IMR-90 (cell line): ENCODE measurements at regions of chr3 and their contacts with region 1.

Region 1: DNA sequence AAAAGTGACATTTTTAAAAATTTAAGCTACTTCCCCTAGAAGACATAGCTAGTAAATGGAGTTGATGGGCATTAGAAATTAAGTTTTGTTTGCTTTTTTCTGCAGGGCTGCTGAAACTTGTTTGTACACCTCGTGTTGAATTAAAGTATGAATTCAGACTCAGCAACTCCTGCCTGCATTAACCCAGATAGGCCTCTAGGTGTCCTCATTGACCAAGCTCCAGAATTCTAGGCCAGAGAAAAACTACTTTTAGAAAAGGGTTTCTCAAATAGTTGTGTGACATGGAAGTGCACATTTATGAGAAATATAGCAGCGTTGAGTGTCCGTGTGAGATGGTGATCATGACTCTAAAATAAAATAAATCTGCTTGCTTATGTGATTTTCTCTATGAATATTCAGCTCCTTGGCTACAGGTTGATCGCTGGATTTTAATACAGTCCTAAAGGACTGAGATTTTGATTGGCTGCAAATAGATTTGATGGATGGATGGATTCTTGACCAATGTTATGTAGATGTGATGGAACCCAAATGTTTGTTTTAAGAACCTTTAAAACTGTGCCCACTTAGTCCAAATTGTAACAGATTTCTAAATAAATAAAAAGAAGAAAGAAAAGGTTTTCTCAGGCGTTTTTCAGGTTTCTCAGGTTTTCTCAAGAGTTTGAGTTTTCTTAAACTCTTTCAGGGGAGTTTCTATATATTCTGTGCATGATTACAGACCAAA is 39.4 kb upstream of the LMOD3 start:
- DNase-seq: peak; percentile 53
- ATAC-seq: peak; percentile 91
- H3K4me3 ChIP-seq: no peak overlapping the region
- H3K27ac ChIP-seq: no peak overlapping the region
- H3K4me1 ChIP-seq: no peaks in the 10 kb centered on the region
- H3K27me3 ChIP-seq: peaks cover 16% of the 10 kb centered on the region
- CTCF ChIP-seq: peak; percentile 94
- POLR2A ChIP-seq: no peak
- RAD21 ChIP-seq: peak; percentile 96

Region 2: GRCh38 chr3:68764554-68764953 is 397.2 kb before region 1 on chr3:
- CTCF ChIA-PET with region 1: no interaction called
- POLR2A ChIA-PET with region 1: no interaction called
- dilution Hi-C with region 1: no loop called
- in situ Hi-C with region 1: no loop called
- intact Hi-C with region 1: no loop called
- DNase-seq: no peak
- ATAC-seq: no peak
- H3K4me3 ChIP-seq: no peak overlapping the region
- H3K27ac ChIP-seq: no peak overlapping the region
- H3K4me1 ChIP-seq: no peaks in the 10 kb centered on the region
- H3K27me3 ChIP-seq: no peaks in the 10 kb centered on the region
- CTCF ChIP-seq: no peak
- POLR2A ChIP-seq: no peak
- RAD21 ChIP-seq: no peak

Region 3: DNA sequence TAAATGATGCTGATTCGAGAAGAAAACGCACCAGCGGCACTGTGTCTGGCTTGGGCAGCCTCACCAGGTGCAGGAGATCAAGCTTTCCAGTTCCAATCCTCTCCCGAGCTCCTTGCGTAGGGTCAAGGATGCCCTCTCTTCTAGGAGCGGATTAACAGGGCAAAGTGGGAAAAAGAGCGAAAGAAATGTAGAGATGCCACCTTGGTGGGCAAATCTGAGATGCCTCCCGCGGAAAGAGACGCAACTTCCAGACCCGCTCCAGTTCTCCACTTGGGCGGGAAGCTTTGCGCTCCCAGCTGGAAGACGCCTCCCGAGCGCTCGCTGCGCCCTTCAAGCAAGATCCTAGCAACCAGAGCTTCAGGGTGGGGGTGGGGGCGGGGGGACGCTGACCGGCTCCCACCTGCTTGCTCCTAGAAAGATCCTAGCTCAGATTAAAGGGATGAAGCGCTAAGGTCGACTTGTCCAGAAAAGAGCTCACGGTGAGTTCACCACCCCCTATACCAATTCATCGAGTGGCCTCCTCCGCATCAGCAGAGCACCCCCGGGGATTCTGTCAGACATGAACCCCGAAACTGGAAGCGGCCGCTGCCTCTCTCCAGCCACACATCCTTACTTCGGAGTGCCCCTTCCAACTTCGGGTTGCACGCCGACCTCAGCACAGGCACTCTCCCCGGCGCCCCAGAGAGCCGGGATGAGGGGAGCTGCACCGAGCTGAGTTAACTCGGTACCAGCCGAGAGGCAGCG is 230.2 kb before region 1 on chr3:
- CTCF ChIA-PET with region 1: no interaction called
- POLR2A ChIA-PET with region 1: no interaction called
- dilution Hi-C with region 1: no loop called
- in situ Hi-C with region 1: no loop called
- intact Hi-C with region 1: no loop called
- DNase-seq: no peak
- ATAC-seq: no peak
- H3K4me3 ChIP-seq: no peak overlapping the region
- H3K27ac ChIP-seq: no peak overlapping the region
- H3K4me1 ChIP-seq: no peaks in the 10 kb centered on the region
- H3K27me3 ChIP-seq: peaks cover 26% of the 10 kb centered on the region
- CTCF ChIP-seq: no peak
- POLR2A ChIP-seq: no peak
- RAD21 ChIP-seq: no peak

Region 4: GRCh38 chr3:68943753-68944500 is 217.8 kb before region 1 on chr3:
- CTCF ChIA-PET with region 1: no interaction called
- POLR2A ChIA-PET with region 1: no interaction called
- dilution Hi-C with region 1: no loop called
- in situ Hi-C with region 1: no loop called
- intact Hi-C with region 1: no loop called
- DNase-seq: no peak
- ATAC-seq: no peak
- H3K4me3 ChIP-seq: no peak overlapping the region
- H3K27ac ChIP-seq: no peak overlapping the region
- H3K4me1 ChIP-seq: no peaks in the 10 kb centered on the region
- H3K27me3 ChIP-seq: no peaks in the 10 kb centered on the region
- CTCF ChIP-seq: no peak
- POLR2A ChIP-seq: no peak
- RAD21 ChIP-seq: no peak

Region 5: DNA sequence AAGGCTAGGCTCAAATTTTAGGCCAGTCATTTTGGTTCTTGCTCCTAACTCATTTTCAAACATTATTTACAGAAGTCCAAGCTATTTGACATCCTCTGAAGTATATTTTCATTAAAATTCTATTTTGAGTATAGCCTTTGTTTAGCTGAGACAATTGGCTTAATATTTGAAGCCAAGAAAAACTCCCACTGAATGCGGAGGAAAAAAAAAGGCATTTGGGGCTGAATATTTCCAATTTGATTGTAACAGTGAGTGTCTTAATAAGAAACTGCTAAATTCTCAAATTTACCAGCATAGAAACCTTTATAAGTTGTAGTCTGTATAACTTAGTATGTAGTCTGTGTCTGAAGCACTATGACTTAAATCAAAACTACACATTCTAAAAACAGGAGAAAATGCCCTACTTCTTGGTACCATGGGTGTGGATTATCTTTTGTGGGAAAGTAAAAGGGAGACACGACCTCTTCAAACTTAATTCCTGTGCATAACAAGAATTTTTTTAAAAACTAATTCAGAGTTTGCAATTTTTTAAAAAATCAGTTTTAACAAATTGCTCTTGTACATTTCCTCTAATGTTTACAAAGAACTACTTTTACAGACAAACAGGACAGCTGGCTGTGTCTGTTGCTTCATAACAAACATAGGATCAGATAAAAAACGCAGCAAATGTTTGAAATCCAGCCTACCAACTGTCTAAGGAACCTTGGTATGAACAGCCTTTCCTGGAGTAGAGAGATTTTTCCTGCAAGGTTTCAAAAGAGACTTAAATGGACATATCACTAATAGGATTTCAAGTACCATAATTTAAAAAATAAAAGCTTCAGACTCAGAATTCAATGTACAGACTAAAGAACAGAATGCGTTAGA is 13.4 kb after region 1 on chr3:
- CTCF ChIA-PET with region 1: interaction called, 16 read pairs
- POLR2A ChIA-PET with region 1: no interaction called
- dilution Hi-C with region 1: no loop called
- in situ Hi-C with region 1: no loop called
- intact Hi-C with region 1: no loop called
- DNase-seq: no peak
- ATAC-seq: no peak
- H3K4me3 ChIP-seq: no peak overlapping the region
- H3K27ac ChIP-seq: no peak overlapping the region
- H3K4me1 ChIP-seq: no peaks in the 10 kb centered on the region
- H3K27me3 ChIP-seq: peaks cover 6% of the 10 kb centered on the region
- CTCF ChIP-seq: no peak
- POLR2A ChIP-seq: no peak
- RAD21 ChIP-seq: no peak

Region 6: GRCh38 chr3:69240651-69241568 is 79.2 kb after region 1 on chr3:
- CTCF ChIA-PET with region 1: no interaction called
- POLR2A ChIA-PET with region 1: no interaction called
- dilution Hi-C with region 1: no loop called
- in situ Hi-C with region 1: no loop called
- intact Hi-C with region 1: no loop called
- DNase-seq: no peak
- ATAC-seq: no peak
- H3K4me3 ChIP-seq: no peak overlapping the region
- H3K27ac ChIP-seq: no peak overlapping the region
- H3K4me1 ChIP-seq: peaks cover 2% of the 10 kb centered on the region; the same call in 1 of the 2 replicates
- H3K27me3 ChIP-seq: peaks cover 58% of the 10 kb centered on the region
- CTCF ChIP-seq: no peak
- POLR2A ChIP-seq: no peak
- RAD21 ChIP-seq: no peak

Region 7: GRCh38 chr3:69288161-69288895 is 126.6 kb after region 1 on chr3:
- CTCF ChIA-PET with region 1: interaction called, 10 read pairs
- POLR2A ChIA-PET with region 1: no interaction called
- dilution Hi-C with region 1: no loop called
- in situ Hi-C with region 1: no loop called
- intact Hi-C with region 1: no loop called
- DNase-seq: no peak
- ATAC-seq: no peak
- H3K4me3 ChIP-seq: no peak overlapping the region
- H3K27ac ChIP-seq: no peak overlapping the region
- H3K4me1 ChIP-seq: no peaks in the 10 kb centered on the region
- H3K27me3 ChIP-seq: peaks cover 6% of the 10 kb centered on the region
- CTCF ChIP-seq: no peak
- POLR2A ChIP-seq: no peak
- RAD21 ChIP-seq: no peak

Region 8: DNA sequence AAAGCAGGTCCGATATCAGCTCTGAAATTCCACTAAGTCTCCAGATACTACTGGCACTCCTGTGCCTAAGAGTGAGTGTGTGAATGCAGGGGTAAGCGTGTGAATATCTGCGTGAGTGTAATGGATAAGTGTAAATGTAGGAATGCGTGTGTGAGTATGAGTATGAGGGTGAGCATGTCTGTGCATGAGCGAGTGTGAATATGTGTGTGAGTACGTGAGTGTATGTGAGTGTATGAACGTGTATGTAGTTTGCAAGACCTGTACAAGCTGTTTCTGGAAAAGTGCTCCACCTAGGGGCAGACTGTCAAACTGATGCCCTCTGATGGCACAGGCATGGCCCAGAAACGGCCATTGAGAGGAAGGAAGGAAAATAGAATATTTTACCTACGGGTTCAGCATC is 248.5 kb after region 1 on chr3:
- CTCF ChIA-PET with region 1: interaction called, 5 read pairs
- POLR2A ChIA-PET with region 1: no interaction called
- dilution Hi-C with region 1: no loop called
- in situ Hi-C with region 1: no loop called
- intact Hi-C with region 1: loop called (anchors 1 kb)
- DNase-seq: peak; percentile 53
- ATAC-seq: peak; percentile 93
- H3K4me3 ChIP-seq: no peak overlapping the region
- H3K27ac ChIP-seq: no peak overlapping the region
- H3K4me1 ChIP-seq: no peaks in the 10 kb centered on the region
- H3K27me3 ChIP-seq: peaks cover 1% of the 10 kb centered on the region
- CTCF ChIP-seq: peak; percentile 67
- POLR2A ChIP-seq: no peak
- RAD21 ChIP-seq: peak; percentile 40

Region 9: GRCh38 chr3:69671082-69671952 is 509.6 kb after region 1 on chr3:
- CTCF ChIA-PET with region 1: interaction called, 4 read pairs
- POLR2A ChIA-PET with region 1: no interaction called
- dilution Hi-C with region 1: no loop called
- in situ Hi-C with region 1: loop called (anchors 10 kb)
- intact Hi-C with region 1: loop called (anchors 1 kb)
- DNase-seq: peak; percentile 42
- ATAC-seq: peak; percentile 75
- H3K4me3 ChIP-seq: no peak overlapping the region
- H3K27ac ChIP-seq: no peak overlapping the region
- H3K4me1 ChIP-seq: no peaks in the 10 kb centered on the region
- H3K27me3 ChIP-seq: peaks cover 2% of the 10 kb centered on the region; the same call in 1 of the 2 replicates
- CTCF ChIP-seq: peak; percentile 77
- POLR2A ChIP-seq: no peak
- RAD21 ChIP-seq: peak; percentile 77

Region 10: DNA sequence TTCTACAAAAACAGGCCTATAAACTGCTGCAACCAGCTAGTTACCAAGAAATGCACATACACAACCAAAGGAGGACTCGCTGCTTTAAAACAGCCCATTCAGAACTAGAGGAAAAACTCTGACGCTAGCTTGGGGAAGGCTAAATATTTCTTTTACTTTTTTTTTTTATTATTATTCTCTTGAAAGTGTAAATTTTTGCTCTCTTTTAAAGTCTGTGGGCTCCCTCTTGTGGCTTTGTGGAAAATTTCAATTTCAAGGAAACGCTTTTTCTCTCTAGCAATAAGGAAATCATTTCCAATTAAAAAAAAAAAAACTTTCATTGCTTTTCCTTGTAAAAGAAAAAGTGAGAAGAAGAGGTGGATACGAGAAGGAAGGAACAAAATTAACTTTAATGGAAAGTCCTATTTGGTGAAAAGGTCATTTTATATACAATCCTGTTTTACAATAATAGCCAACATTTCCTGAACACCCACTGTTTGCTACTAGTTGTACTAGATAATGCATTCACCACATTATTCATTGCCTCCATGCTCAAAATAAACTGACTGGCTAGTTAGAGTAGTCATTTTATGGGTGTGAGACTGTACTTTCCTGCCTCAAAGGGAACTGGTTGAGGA is 786.6 kb after region 1 on chr3:
- CTCF ChIA-PET with region 1: no interaction called
- POLR2A ChIA-PET with region 1: no interaction called
- dilution Hi-C with region 1: no loop called
- in situ Hi-C with region 1: loop called (anchors 25 kb)
- intact Hi-C with region 1: loop called (anchors 2 kb)
- DNase-seq: peak; percentile 66
- ATAC-seq: peak; percentile 59
- H3K4me3 ChIP-seq: no peak overlapping the region
- H3K27ac ChIP-seq: peak overlapping the region; percentile 62
- H3K4me1 ChIP-seq: peaks cover 4% of the 10 kb centered on the region
- H3K27me3 ChIP-seq: no peaks in the 10 kb centered on the region
- CTCF ChIP-seq: peak; percentile 75
- POLR2A ChIP-seq: no peak
- RAD21 ChIP-seq: peak; percentile 77